ENCODE measurements at regions of chr15 and their contacts with region 1.

Region 1: GRCh38 chr15:95365511-95366107 is 964.9 kb upstream of the NR2F2 start:
- DNase-seq: peak in 4 of 5 donors; percentile 60 to 95 (median 74)
- H3K4me3 ChIP-seq: no peak overlapping the region
- H3K27ac ChIP-seq: peak overlapping the region; percentile 59
- H3K4me1 ChIP-seq: peaks cover 0 to 15% (median 0%) of the 10 kb centered on the region in 3 donors
- H3K27me3 ChIP-seq: no peaks in the 10 kb centered on the region
- CTCF ChIP-seq: no peak

Region 2: DNA sequence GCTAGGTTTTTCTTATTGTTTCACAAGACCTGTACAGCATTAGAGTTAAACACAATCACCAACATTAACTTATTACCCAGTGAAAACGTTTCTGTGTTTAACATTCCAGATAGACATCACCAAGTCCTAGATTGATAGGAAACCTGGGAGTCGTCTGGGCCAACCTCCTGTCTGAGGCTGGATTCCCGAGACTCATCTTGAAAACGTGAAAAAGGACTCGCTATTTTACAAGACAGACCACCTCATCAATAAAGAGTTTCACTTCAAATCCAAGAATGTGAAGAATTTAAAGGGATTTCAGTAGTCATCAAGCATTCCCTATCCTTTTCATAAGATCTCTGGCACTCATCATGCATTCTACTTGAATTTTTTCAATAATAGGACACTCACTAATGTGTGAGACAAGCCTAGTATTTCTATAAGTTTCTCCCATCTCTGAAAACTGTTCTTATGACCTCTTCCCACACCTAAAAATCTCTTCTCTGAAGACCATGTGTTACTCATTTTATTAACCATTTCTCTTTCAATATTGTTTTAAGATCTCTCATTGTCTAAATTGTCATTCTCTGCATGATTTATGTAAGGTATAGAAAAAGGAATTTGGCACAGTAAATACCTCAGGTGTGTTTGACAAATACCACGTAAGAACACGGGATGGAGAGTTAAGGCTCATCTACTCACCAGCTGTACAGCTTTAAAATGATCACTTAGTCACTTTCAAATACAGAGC is 507.4 kb before region 1 on chr15:
- intact Hi-C with region 1: no loop called
- DNase-seq: no peak
- H3K4me3 ChIP-seq: no peak overlapping the region
- H3K27ac ChIP-seq: no peak overlapping the region
- H3K4me1 ChIP-seq: no peaks in the 10 kb centered on the region
- H3K27me3 ChIP-seq: no peaks in the 10 kb centered on the region
- CTCF ChIP-seq: no peak

Region 3: GRCh38 chr15:95304151-95304946 is 61.3 kb before region 1 on chr15:
- intact Hi-C with region 1: loop called (anchors 10 kb)
- DNase-seq: peak in 3 of 5 donors; percentile 56 to 94 (median 79)
- H3K4me3 ChIP-seq: peak overlapping the region in 1 of 3 donors; percentile 12
- H3K27ac ChIP-seq: peak overlapping the region; percentile 54 to 65
- H3K4me1 ChIP-seq: peaks cover 0 to 5% (median 0%) of the 10 kb centered on the region in 3 donors
- H3K27me3 ChIP-seq: no peaks in the 10 kb centered on the region
- CTCF ChIP-seq: no peak